Sciatic nerve (tissue), 2 donors: ENCODE measurements at regions of chr17 and their contacts with region 1.

Region 1: DNA sequence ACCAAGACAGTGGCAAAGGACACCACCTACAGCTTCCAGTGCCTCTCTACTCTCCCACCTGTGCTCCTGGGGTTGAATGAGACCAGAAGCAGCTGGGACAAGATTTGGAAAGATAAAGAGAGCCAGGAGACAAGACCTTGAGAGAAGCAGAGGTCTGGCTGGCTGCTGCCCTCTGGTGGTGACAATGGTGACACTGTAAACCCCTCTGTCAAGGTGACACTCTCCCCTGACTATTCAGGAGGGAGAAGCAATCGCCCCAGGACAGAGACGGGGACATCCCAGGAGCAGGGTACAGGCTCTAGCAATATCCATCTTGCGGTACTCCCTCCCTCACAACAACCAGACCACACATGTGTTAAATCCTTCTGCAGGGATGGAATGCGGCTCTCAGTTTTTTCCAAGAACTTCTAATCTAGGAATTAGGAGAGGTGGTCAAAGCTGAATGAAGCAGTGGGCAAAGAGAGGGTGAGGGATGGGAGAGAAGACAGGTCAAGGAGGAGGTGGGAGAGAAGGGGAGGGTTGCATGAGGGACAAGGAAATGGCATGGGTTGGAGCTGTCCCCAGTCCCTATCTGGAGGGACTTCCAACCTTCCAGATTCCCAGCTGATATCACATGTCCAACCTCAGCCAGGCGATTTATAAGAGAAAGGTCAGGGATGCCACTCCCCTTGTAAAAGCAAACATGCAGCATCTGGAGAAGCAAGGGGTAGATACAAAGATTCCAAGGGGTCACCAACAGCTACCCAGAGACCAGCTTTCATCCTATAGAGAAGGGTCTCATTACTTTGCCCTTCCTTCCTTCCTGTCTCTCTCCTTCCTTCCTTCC is 2.9 kb downstream of the PHOSPHO1 start:
- DNase-seq: peak; percentile 85
- ATAC-seq: peak; percentile 47

Region 2: DNA sequence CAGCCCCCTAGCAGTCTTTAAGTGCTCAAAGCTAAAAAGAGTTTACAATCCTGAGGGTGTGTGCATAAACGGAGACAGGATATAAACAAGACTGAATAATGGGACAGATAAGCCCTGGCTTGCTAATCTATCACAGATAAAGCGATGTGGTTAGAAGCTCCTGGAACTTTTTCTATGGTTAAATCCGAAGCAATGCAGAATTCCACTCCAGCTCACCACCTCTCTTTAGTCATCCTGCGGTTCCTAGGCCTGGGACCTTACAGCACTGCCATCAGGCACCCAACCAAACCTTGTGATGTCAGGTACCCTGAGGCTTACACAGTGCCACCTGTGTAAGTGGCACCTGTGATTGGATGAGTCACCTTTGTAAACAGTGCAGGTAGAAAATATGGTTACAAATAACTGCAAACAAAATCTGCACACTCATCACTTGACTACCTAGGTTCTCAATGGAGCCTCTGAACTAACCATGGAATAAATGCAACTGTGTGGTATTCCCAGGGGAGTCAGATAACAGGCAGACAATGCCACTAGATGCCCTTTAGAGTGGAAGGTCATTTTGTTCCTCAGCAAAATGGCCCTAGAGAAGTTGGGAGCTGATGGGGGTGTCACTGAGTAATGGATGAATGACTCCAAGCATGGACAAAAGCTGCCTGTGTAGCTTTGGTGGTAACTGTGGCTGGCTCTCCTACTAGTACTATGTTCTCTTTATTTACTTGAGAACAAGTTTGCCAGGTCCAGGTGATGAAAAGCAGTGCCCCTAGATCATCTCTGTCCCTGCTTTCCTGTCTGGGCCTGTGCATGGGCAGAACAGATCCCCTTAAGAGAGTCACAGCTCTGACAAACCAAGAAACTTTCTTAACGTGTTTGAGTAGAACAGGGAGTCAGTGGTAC is 126.3 kb before region 1 on chr17:
- intact Hi-C with region 1: no loop called
- DNase-seq: no peak
- ATAC-seq: no peak

Region 3: GRCh38 chr17:49280061-49280460 is 52.4 kb after region 1 on chr17:
- intact Hi-C with region 1: loop called (anchors 10 kb)
- DNase-seq: no peak
- ATAC-seq: no peak

Region 4: GRCh38 chr17:49414622-49415350 is 187.1 kb after region 1 on chr17 and contains the start of gene PHB1:
- intact Hi-C with region 1: no loop called
- DNase-seq: peak; percentile 96
- ATAC-seq: peak; percentile 100
- total RNA-seq, gene PHB1: 93.5 TPM

Region 5: GRCh38 chr17:49438436-49439278 is 211.0 kb after region 1 on chr17:
- intact Hi-C with region 1: no loop called
- DNase-seq: no peak
- ATAC-seq: peak; percentile 32